ENCODE measurements at regions of chr19 and their contacts with region 1.

Region 1: GRCh38 chr19:7680606-7681339 is at the start of gene TRAPPC5:
- DNase-seq: peak; percentile 86
- ATAC-seq: peak; percentile 60
- H3K4me3 Mint-ChIP-seq: peak within 1 kb of the TSS; percentile 79
- H3K27ac Mint-ChIP-seq: no peak within 1 kb of the TSS
- H3K4me1 Mint-ChIP-seq: peaks cover 16% of the 10 kb centered on the region
- H3K27me3 Mint-ChIP-seq: peaks cover 37% of the 10 kb centered on the region
- CTCF ChIP-seq: peak; percentile 82
- total RNA-seq, gene TRAPPC5: 122 to 127 TPM (median 124 TPM) in 3 replicates

Region 2: GRCh38 chr19:7535035-7535992 is 145.5 kb before region 1 on chr19 and contains the start of gene PNPLA6:
- CTCF ChIA-PET with region 1: interaction called, 10 read pairs
- POLR2A ChIA-PET with region 1: no interaction called
- DNase-seq: peak; percentile 96
- ATAC-seq: peak; percentile 80
- H3K4me3 Mint-ChIP-seq: peak within 1 kb of the TSS; percentile 97
- H3K27ac Mint-ChIP-seq: peak within 1 kb of the TSS; percentile 99
- H3K4me1 Mint-ChIP-seq: peaks cover 4% of the 10 kb centered on the region; the same call in 1 of the 2 replicates
- H3K27me3 Mint-ChIP-seq: no peaks in the 10 kb centered on the region
- CTCF ChIP-seq: no peak
- total RNA-seq, gene PNPLA6: 149 to 156 TPM (median 150 TPM) in 3 replicates

Region 3: DNA sequence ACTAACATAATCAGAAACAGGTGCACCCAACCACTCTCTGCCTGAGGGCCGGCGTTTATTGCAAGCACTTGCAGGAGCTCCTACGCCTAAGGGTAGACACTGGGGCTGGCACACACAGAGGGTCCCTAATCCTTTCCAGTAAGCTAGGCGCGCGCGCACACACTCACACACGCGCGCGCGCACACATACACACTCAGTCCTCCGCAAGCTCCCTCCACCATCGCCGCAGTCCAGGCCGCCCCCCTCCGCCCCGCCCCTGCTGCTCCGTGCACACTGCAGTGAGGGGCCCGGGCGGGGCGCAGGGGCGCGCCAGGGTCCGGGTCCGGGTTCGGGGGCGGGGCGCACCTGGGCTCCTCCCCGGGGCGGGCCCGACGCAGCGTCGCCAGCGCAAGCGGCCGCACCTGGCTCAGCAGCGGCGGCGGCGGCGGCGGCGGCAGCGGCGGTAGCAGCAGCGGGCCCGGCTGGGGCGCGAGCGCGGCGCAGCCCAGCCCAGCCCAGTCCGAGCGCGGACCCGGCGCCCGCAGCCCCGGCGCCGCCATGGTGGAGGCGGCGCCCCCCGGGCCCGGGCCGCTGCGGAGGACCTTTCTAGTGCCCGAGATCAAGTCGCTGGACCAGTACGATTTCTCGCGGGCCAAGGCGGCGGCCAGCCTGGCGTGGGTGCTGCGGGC is 85.2 kb before region 1 on chr19 and contains the start of gene CAMSAP3:
- CTCF ChIA-PET with region 1: interaction called, 24 read pairs
- POLR2A ChIA-PET with region 1: no interaction called
- DNase-seq: peak; percentile 90
- ATAC-seq: peak; percentile 96
- H3K4me3 Mint-ChIP-seq: peak within 1 kb of the TSS; percentile 79
- H3K27ac Mint-ChIP-seq: no peak within 1 kb of the TSS
- H3K4me1 Mint-ChIP-seq: peaks cover 17% of the 10 kb centered on the region
- H3K27me3 Mint-ChIP-seq: peaks cover 17% of the 10 kb centered on the region
- CTCF ChIP-seq: no peak
- total RNA-seq, gene CAMSAP3: 27.8 to 34.6 TPM (median 32.1 TPM) in 3 replicates

Region 4: GRCh38 chr19:7611541-7612279 is 69.1 kb before region 1 on chr19:
- CTCF ChIA-PET with region 1: no interaction called
- POLR2A ChIA-PET with region 1: no interaction called
- DNase-seq: no peak
- ATAC-seq: no peak
- H3K4me3 Mint-ChIP-seq: no peak overlapping the region
- H3K27ac Mint-ChIP-seq: no peak overlapping the region
- H3K4me1 Mint-ChIP-seq: no peaks in the 10 kb centered on the region
- H3K27me3 Mint-ChIP-seq: no peaks in the 10 kb centered on the region; the same call in 1 of the 2 replicates
- CTCF ChIP-seq: no peak

Region 5: GRCh38 chr19:7652061-7652641 is 28.6 kb before region 1 on chr19:
- CTCF ChIA-PET with region 1: interaction called, 28 read pairs
- POLR2A ChIA-PET with region 1: no interaction called
- DNase-seq: peak; percentile 88
- ATAC-seq: peak; percentile 87
- H3K4me3 Mint-ChIP-seq: peak overlapping the region; percentile 44
- H3K27ac Mint-ChIP-seq: 0 out of 2 replicates have a peak overlapping the region, but pooled peaks have one; percentile 11
- H3K4me1 Mint-ChIP-seq: peaks cover 7% of the 10 kb centered on the region
- H3K27me3 Mint-ChIP-seq: peaks cover 59% of the 10 kb centered on the region
- CTCF ChIP-seq: peak; percentile 99

Region 6: GRCh38 chr19:7701654-7702457 is 21.1 kb after region 1 on chr19 and contains the start of gene FCER2:
- CTCF ChIA-PET with region 1: interaction called, 40 read pairs
- POLR2A ChIA-PET with region 1: no interaction called
- DNase-seq: no peak
- ATAC-seq: no peak
- H3K4me3 Mint-ChIP-seq: no peak within 1 kb of the TSS
- H3K27ac Mint-ChIP-seq: no peak within 1 kb of the TSS
- H3K4me1 Mint-ChIP-seq: peaks cover 23% of the 10 kb centered on the region
- H3K27me3 Mint-ChIP-seq: peaks cover 18% of the 10 kb centered on the region
- CTCF ChIP-seq: no peak
- total RNA-seq, gene FCER2: 0.37 to 0.48 TPM (median 0.46 TPM) in 3 replicates

Region 7: DNA sequence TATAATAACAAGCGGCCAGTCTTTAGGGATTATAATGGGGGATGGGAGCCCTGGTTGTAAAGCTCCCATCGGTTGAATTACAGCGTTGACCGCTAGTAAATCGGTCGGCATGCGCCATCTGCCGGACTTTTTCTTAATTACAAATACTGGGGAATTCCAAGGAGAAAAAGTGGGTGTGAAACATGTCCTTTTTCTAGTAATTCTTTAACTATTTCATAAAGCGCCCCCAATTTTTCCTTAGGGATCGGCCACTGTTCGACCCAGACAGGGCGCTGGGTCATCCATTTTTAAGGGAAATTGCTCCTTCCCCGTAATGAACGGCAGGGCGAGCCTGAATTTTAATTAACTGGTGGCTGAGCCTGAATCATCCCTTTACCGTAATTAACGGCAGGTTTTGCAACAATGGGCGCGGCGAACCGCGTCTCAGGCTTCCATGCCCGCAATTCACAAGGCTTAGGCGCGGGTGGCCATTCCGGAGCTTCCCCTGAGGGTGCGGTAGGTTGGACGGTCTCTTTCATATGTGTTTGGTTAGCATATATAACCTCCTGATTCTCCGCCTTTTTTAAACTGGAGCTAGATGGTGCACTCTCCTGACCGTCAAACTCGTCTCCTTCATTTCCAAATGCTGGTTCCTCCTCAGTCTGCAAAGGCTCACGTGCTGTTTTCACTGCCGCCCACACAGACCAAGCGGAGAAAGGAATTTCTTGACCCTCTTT is 119.0 kb after region 1 on chr19:
- CTCF ChIA-PET with region 1: interaction called, 76 read pairs
- POLR2A ChIA-PET with region 1: interaction called, 3 read pairs
- DNase-seq: peak; percentile 81
- ATAC-seq: peak; percentile 72
- H3K4me3 Mint-ChIP-seq: peak overlapping the region; percentile 64
- H3K27ac Mint-ChIP-seq: no peak overlapping the region
- H3K4me1 Mint-ChIP-seq: peaks cover 21% of the 10 kb centered on the region
- H3K27me3 Mint-ChIP-seq: peaks cover 35% of the 10 kb centered on the region
- CTCF ChIP-seq: peak; percentile 57

Region 8: DNA sequence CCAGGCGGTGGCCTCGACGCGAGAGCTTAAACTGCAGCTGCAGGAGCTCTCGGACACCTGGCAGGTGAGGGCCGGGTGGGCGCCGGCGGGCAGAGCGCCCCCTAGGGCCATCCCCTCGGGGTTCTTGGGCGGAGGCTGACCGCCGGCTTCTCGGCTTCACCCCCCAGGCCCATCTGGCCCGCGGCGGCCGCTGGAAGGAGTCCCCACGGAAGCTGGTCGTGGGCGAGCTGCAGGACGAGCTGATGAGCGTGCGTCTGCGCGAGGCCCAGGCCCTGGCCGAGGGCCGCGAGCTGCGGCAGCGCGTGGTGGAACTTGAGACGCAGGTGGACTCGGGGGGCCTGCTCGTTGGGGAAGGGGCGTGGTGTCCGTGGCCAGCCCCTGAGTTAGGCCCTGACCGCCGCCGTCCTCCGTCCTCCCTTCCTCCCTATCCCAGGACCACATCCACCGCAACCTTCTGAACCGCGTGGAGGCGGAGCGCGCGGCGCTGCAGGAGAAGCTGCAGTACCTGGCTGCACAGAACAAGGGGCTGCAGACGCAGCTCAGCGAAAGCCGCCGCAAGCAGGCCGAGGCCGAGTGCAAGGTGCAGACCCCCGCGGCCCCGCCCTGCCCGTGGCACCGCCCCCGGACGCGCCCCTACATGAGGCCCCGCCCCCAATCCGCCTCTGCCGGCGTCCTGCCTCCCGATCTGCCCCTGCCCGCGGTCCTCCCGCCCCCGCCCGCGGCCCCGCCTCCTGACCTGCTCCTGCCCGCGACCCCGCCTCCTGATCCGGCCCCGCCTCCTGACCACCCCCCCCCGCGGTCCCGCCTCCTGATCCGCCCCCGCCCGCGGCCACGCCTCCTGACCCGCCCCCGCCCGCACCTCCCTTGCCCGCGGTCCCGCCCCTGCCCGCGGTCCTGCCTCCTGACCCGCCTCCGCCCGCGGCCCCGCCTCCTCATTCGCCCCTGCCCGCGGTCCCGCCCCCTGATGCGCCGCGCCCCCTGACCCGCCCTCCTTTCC is 181.5 kb after region 1 on chr19:
- CTCF ChIA-PET with region 1: interaction called, 16 read pairs
- POLR2A ChIA-PET with region 1: no interaction called
- DNase-seq: peak; percentile 99
- ATAC-seq: peak; percentile 71
- H3K4me3 Mint-ChIP-seq: peak overlapping the region; percentile 79
- H3K27ac Mint-ChIP-seq: no peak overlapping the region
- H3K4me1 Mint-ChIP-seq: peaks cover 21% of the 10 kb centered on the region
- H3K27me3 Mint-ChIP-seq: peaks cover 77% of the 10 kb centered on the region
- CTCF ChIP-seq: peak; percentile 22; the same call in 1 of the 2 replicates